Activated CD4-positive, alpha-beta memory T cell treated with anti-CD3 and anti-CD28 coated beads for 36 hours (primary cell): ENCODE measurements at regions of chr6 and their contacts with region 1.

Region 1: GRCh38 chr6:28425944-28426541 is 17.2 kb downstream of the ZSCAN23 start:
- DNase-seq: peak; percentile 23
- H3K4me3 Mint-ChIP-seq: no peak overlapping the region
- H3K27ac Mint-ChIP-seq: no peak overlapping the region
- H3K4me1 Mint-ChIP-seq: peaks cover 12% of the 10 kb centered on the region
- H3K27me3 Mint-ChIP-seq: peaks cover 21% of the 10 kb centered on the region

Region 2: DNA sequence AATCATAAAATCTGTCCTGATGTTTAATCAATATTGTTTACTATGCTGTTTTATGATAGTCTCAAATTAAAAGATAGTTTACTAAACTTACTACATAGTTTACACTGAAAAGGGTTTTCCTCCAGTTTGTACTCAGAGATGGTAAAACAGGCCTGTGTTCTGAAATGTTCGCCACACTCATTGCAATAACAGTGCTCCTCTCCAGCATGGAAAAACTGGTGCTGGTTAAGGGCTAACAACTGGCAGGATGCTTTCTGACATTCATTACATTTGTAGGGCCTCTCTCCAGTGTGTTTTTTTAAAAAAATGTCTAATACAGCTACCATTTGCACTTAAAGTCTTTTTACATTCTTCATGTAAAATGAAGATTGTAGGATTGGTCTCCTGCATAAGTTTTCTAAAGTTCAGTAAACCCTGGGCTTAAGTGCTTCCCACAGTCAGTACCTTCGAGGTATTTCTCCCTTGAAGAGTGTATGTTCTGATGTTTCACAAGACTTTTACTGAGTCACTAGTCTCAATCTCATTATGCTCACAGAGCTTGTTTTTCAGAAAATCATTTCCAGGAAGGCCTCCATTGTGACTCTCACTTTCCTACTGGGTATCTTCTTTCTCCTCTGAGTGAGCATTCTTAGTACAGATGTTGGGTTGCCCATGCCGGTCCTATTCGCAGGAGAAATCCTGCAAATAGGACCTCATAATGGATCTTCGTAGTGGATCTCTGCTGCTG is 17.8 kb before region 1 on chr6:
- CTCF ChIA-PET with region 1: no interaction called
- POLR2A ChIA-PET with region 1: no interaction called
- intact Hi-C with region 1: loop called (anchors 1 kb)
- DNase-seq: peak; percentile 13
- H3K4me3 Mint-ChIP-seq: no peak overlapping the region
- H3K27ac Mint-ChIP-seq: peak overlapping the region; percentile 31
- H3K4me1 Mint-ChIP-seq: peaks cover 10% of the 10 kb centered on the region
- H3K27me3 Mint-ChIP-seq: peaks cover 34% of the 10 kb centered on the region

Region 3: DNA sequence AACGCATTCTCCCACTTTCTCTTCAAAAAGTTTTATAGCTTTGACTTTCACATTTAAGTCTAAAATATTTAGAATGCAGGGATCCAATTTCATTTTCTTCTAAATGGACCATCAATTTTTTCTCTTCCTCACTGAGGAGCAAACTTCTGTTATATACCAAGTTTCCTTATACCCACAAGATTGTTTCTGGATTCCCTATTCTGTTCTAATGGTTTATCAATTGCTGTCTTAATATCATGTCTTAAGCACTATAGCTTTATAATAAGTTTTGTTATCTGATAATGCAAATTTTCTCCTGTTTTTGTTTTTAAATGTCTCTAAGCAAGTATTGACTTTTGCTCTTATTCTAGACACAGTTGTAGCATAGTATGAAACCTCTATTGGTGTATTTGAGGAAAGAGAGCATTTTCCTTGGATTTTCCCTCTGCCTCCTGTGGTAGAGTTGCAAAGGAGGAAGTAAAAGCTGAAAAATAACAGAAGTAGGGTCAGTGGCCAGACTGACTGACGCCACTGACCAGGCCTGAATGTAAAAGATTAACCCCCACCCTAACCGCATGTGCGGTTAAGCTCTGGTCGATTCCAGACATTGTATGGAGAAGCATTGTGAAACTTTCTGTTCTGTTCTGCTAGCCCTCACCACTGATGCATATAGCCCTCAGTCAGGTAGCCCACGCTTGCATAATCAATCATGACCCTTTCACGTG is 139.9 kb after region 1 on chr6:
- CTCF ChIA-PET with region 1: no interaction called
- POLR2A ChIA-PET with region 1: no interaction called
- intact Hi-C with region 1: no loop called
- DNase-seq: no peak
- H3K4me3 Mint-ChIP-seq: no peak overlapping the region
- H3K27ac Mint-ChIP-seq: no peak overlapping the region
- H3K4me1 Mint-ChIP-seq: no peaks in the 10 kb centered on the region
- H3K27me3 Mint-ChIP-seq: peaks cover 33% of the 10 kb centered on the region